ENCODE measurements at regions of chr4 and their contacts with region 1.

Region 1: DNA sequence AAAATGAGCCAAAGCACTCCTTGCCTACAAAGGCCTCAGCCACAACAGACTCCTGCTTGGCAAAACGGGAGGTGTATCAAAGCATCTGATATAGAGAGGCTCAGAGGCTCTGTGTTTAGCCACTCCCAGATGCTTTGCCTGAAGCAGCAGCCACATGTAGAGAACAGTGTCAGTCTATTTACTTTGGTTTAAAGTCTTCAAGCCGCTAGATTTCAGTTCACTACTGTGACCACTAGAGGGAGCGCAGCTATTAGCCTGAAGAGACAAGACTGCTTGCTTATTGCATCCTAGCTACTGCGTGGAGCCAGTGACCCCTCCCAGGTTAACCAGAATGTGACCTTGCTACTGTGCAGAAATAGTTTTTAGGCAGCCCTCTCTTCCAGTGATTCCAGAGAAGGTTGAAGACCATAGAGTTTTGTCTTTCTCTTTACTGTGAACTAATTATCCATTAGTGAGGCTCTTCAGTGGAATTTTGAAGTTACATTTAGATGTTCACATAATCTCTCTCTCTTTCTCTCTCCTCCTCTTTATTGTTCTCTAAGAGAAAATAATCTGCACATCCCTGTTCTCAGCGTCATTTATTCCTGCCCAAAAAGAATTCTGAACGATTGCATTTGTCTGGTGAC is 39.3 kb downstream of the BMP3 start:
- DNase-seq: peak; percentile 71
- H3K4me3 ChIP-seq: no peak overlapping the region
- H3K27ac ChIP-seq: no peak overlapping the region
- H3K4me1 ChIP-seq: no peaks in the 10 kb centered on the region
- H3K27me3 ChIP-seq: no peaks in the 10 kb centered on the region
- CTCF ChIP-seq: peak; percentile 78 to 88
- POLR2A ChIP-seq: no peak

Region 2: GRCh38 chr4:81052119-81053068 is 17.4 kb before region 1 on chr4:
- CTCF ChIA-PET with region 1: interaction called, 16 read pairs
- POLR2A ChIA-PET with region 1: no interaction called
- dilution Hi-C with region 1: no loop called
- intact Hi-C with region 1: no loop called
- DNase-seq: peak; percentile 52
- H3K4me3 ChIP-seq: no peak overlapping the region
- H3K27ac ChIP-seq: no peak overlapping the region
- H3K4me1 ChIP-seq: no peaks in the 10 kb centered on the region
- H3K27me3 ChIP-seq: no peaks in the 10 kb centered on the region
- CTCF ChIP-seq: peak; percentile 56
- POLR2A ChIP-seq: no peak

Region 3: GRCh38 chr4:81084634-81085033 is 14.8 kb after region 1 on chr4:
- CTCF ChIA-PET with region 1: interaction called, 12 read pairs
- POLR2A ChIA-PET with region 1: no interaction called
- dilution Hi-C with region 1: no loop called
- intact Hi-C with region 1: no loop called
- DNase-seq: no peak
- H3K4me3 ChIP-seq: no peak overlapping the region
- H3K27ac ChIP-seq: no peak overlapping the region
- H3K4me1 ChIP-seq: no peaks in the 10 kb centered on the region
- H3K27me3 ChIP-seq: no peaks in the 10 kb centered on the region
- CTCF ChIP-seq: no peak
- POLR2A ChIP-seq: no peak

Region 4: GRCh38 chr4:81351654-81352445 is 282.0 kb after region 1 on chr4:
- CTCF ChIA-PET with region 1: interaction called, 38 read pairs
- POLR2A ChIA-PET with region 1: no interaction called
- dilution Hi-C with region 1: no loop called
- intact Hi-C with region 1: loop called (anchors 1 kb)
- DNase-seq: peak; percentile 60
- H3K4me3 ChIP-seq: no peak overlapping the region
- H3K27ac ChIP-seq: no peak overlapping the region
- H3K4me1 ChIP-seq: no peaks in the 10 kb centered on the region
- H3K27me3 ChIP-seq: no peaks in the 10 kb centered on the region
- CTCF ChIP-seq: peak; percentile 88 to 89
- POLR2A ChIP-seq: no peak